GM12878 (cell line): ENCODE measurements at regions of chr13 and their contacts with region 1.

Region 1: DNA sequence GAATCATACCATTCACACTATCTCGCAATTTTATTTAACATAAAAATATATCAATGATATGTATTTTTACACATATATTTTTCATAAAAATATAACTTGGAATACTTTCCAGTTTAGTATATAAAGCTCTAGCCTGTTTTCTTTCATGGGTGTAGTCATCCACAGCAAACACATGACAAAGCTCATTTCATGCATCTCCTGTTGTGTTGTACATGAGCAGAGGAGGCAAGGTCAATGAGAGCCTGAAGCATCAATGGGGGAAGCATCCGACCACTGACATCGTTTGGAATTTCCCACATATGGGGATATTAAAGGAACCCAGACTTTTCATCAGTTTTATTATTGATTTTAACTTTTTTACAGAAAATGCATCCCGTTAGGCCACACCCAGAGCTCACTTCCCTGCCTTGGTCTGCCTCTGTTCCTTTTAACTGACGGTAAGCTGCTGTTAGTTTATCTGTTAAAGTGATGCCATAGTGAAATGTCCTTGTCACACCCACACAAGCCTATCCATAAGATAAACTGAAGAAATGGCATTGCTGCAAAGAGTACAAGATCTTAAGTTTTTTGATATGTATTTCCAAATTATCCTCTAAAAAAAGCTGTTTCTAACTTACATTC is 44.0 kb downstream of the MIPEP start:
- DNase-seq: no peak
- ATAC-seq: peak; percentile 59
- H3K4me3 ChIP-seq: 0 out of 2 replicates have a peak overlapping the region, but pooled peaks have one; percentile 26
- H3K27ac ChIP-seq: peak overlapping the region; percentile 82
- H3K4me1 ChIP-seq: peaks cover 56% of the 10 kb centered on the region
- H3K27me3 ChIP-seq: no peaks in the 10 kb centered on the region
- CTCF ChIP-seq: no peak
- EP300 ChIP-seq: no peak
- POLR2A ChIP-seq: no peak
- RAD21 ChIP-seq: no peak

Region 2: GRCh38 chr13:23715762-23716235 is 129.4 kb before region 1 on chr13:
- CTCF ChIA-PET with region 1: interaction called, 4 read pairs
- POLR2A ChIA-PET with region 1: no interaction called
- RAD21 ChIA-PET with region 1: no interaction called
- SMC1A ChIA-PET with region 1: interaction called, 10 read pairs
- in situ Hi-C with region 1: no loop called
- intact Hi-C with region 1: no loop called
- DNase-seq: no peak
- ATAC-seq: peak; percentile 40
- H3K4me3 ChIP-seq: no peak overlapping the region
- H3K27ac ChIP-seq: no peak overlapping the region
- H3K4me1 ChIP-seq: peaks cover 8% of the 10 kb centered on the region
- H3K27me3 ChIP-seq: no peaks in the 10 kb centered on the region
- CTCF ChIP-seq: peak; percentile 17 to 46 (median 38); a peak in 3 of 6 replicates
- EP300 ChIP-seq: no peak
- POLR2A ChIP-seq: no peak
- RAD21 ChIP-seq: peak; percentile 56

Region 3: GRCh38 chr13:23810685-23811240 is 34.5 kb before region 1 on chr13:
- CTCF ChIA-PET with region 1: interaction called, 16 read pairs
- POLR2A ChIA-PET with region 1: interaction called, 14 read pairs
- RAD21 ChIA-PET with region 1: interaction called, 26 read pairs
- SMC1A ChIA-PET with region 1: interaction called, 40 read pairs
- in situ Hi-C with region 1: no loop called
- intact Hi-C with region 1: loop called (anchors 5 kb)
- DNase-seq: no peak
- ATAC-seq: peak; percentile 76
- H3K4me3 ChIP-seq: no peak overlapping the region
- H3K27ac ChIP-seq: peak overlapping the region; percentile 81
- H3K4me1 ChIP-seq: peaks cover 56% of the 10 kb centered on the region
- H3K27me3 ChIP-seq: no peaks in the 10 kb centered on the region
- CTCF ChIP-seq: peak; percentile 41 to 57 (median 51); a peak in 4 of 6 replicates
- EP300 ChIP-seq: 0 out of 4 replicates have a peak, but pooled peaks of 1 of the 2 experiments have one; percentile 35
- POLR2A ChIP-seq: no peak
- RAD21 ChIP-seq: peak; percentile 53

Region 4: DNA sequence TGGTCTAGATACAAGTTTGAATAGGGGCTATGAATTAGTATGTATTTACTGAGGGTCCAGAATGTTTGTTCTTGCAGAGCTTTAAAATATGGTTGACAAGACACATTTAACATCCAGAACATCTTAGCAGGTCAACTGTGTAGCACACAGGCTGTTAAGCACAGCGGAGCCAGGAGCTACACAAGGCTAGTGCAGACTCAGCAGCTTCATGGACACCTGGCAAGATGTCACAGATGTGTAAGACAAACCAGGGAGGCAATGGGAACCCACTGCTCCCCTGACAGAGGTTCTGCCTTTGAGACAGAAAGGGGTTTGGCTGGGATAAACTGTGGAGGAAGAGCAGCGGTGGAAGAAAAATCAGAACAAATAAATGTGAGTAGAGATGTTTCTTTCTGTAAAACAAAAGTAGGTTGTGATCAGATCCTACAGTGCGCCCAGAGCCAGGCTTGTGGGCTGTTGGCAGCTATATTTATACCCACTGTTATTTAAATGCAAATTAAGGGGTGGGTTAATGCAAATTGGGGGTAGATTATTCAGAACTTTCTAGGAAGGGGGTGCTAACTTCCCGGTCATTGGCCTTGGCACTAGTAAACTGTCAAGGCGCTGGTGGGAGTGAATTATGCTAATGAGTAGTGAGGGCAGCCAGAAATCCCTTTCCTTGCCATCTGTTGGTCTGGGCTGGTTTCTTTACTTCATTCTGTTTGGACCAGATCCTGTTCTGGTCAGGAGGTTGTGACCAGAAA is 11.0 kb after region 1 on chr13:
- CTCF ChIA-PET with region 1: interaction called, 5 read pairs
- POLR2A ChIA-PET with region 1: interaction called, 4 read pairs
- RAD21 ChIA-PET with region 1: interaction called, 5 read pairs
- SMC1A ChIA-PET with region 1: interaction called, 21 read pairs
- in situ Hi-C with region 1: no loop called
- intact Hi-C with region 1: no loop called
- DNase-seq: no peak
- ATAC-seq: peak; percentile 23
- H3K4me3 ChIP-seq: no peak overlapping the region
- H3K27ac ChIP-seq: peak overlapping the region; percentile 49
- H3K4me1 ChIP-seq: peaks cover 13% of the 10 kb centered on the region
- H3K27me3 ChIP-seq: no peaks in the 10 kb centered on the region
- CTCF ChIP-seq: no peak
- EP300 ChIP-seq: no peak
- POLR2A ChIP-seq: no peak
- RAD21 ChIP-seq: no peak

Region 5: GRCh38 chr13:23888658-23889614 is 43.7 kb after region 1 on chr13 and contains the start of gene MIPEP:
- CTCF ChIA-PET with region 1: interaction called, 17 read pairs
- POLR2A ChIA-PET with region 1: no interaction called
- RAD21 ChIA-PET with region 1: interaction called, 5 read pairs
- SMC1A ChIA-PET with region 1: interaction called, 3 read pairs
- in situ Hi-C with region 1: no loop called
- intact Hi-C with region 1: no loop called
- DNase-seq: peak; percentile 79
- ATAC-seq: peak; percentile 96
- H3K4me3 ChIP-seq: peak within 1 kb of the TSS; percentile 70
- H3K27ac ChIP-seq: peak within 1 kb of the TSS; percentile 69
- H3K4me1 ChIP-seq: no peaks in the 10 kb centered on the region
- H3K27me3 ChIP-seq: no peaks in the 10 kb centered on the region
- CTCF ChIP-seq: peak; percentile 83 to 91 (median 87)
- EP300 ChIP-seq: peak in 1 of 2 experiments; percentile 15; a peak in 1 of 4 replicates
- POLR2A ChIP-seq: peak; percentile 79
- RAD21 ChIP-seq: no peak
- polyA plus RNA-seq, gene MIPEP: 15.6 to 28.2 TPM